AG04449 (cell line): ENCODE measurements at regions of chr5 and their contacts with region 1.

Region 1: GRCh38 chr5:15821506-15821905 is 321.5 kb downstream of the FBXL7 start:
- DNase-seq: peak; percentile 17
- H3K4me3 ChIP-seq: no peak overlapping the region
- CTCF ChIP-seq: no peak

Region 2: DNA sequence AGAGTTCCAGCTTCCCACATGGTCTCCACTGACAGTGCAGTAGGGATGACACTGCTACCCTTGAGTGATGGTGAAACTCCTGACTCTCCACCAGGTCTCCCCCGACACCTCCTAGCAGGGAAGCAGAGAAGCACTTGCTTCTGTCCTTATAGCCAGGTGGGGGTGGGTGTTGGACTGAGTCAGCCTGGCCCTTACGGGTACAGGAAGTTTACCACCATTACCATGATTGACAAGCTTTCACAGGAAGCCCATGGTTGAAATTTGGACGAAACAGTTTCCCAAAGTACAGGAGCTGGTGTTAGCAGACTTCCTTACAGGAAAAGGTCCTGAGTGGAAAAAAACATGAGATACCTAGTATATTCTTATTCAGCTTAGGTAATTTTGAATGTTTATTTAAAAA is 324.6 kb before region 1 on chr5:
- CTCF ChIA-PET with region 1: interaction called, 10 read pairs
- POLR2A ChIA-PET with region 1: no interaction called
- DNase-seq: no peak
- H3K4me3 ChIP-seq: no peak overlapping the region
- CTCF ChIP-seq: no peak

Region 3: GRCh38 chr5:15834596-15835245 is 13.2 kb after region 1 on chr5:
- CTCF ChIA-PET with region 1: interaction called, 29 read pairs
- POLR2A ChIA-PET with region 1: no interaction called
- DNase-seq: peak; percentile 70
- H3K4me3 ChIP-seq: no peak overlapping the region
- CTCF ChIP-seq: no peak